K562 (cell line): ENCODE measurements at regions of chr16 and their contacts with region 1.

Region 1: GRCh38 chr16:68848786-68849185 is 5.5 kb downstream of the TANGO6 start:
- DNase-seq: no peak
- ATAC-seq: no peak
- H3K4me3 ChIP-seq: no peak overlapping the region
- H3K27ac ChIP-seq: no peak overlapping the region
- H3K4me1 ChIP-seq: peaks cover 0 to 3% of the 10 kb centered on the region in 2 experiments; a peak in 1 of 5 replicates
- H3K27me3 ChIP-seq: no peaks in the 10 kb centered on the region
- CTCF ChIP-seq: no peak
- EP300 ChIP-seq: no peak
- POLR2A ChIP-seq: no peak
- RAD21 ChIP-seq: no peak

Region 2: DNA sequence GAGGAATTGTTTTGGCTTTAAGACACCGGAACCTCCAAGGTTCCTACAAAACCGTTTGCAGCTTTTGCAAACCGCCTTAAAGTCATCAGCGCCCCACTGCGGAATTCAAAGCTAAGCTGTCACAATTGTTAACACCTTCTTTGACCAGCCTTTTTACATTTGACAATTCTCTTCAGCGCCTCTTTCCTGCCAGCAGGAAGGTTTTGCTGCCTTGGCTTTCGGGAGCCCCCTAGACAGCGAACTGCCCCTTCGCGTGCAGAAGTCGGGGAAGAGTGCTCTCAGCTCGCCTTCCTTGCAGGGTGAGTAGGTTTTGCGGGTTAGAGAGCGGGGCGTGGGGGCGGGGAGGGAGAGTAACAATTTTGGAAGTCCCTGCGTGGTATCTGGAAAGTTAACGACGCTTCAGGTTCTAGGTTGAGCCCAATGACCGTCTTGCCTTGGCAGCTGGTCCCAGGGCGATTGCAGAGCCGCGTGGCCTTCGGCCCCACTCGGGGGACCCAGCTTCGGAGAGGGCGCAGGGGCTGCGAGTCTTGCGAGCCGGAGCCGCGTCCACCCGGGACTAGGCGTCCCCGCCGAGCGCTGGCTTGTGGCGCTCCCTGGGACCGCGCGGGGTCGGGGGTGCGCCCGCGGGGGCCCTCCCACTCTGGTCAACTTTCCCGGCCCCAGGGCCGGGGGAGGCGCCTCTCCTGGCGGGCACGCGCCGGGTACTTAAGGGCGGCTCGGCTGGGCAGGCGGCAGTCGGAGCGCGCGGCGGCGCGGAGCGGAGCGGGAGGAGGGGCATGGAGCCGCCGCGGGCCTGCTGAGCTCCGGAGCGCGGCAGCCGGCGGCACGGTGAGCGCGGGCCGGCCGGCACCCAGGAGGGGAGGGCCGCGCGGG is 256.9 kb after region 1 on chr16 and contains the start of gene HAS3:
- CTCF ChIA-PET with region 1: no interaction called
- POLR2A ChIA-PET with region 1: interaction called, 3 read pairs
- in situ Hi-C with region 1: no loop called
- intact Hi-C with region 1: loop called (anchors 5 kb)
- DNase-seq: peak; percentile 61 to 85 (median 79)
- ATAC-seq: peak; percentile 87
- H3K4me3 ChIP-seq: peak within 1 kb of the TSS; percentile 65
- H3K27ac ChIP-seq: no peak within 1 kb of the TSS; the same call in 2 of the 3 replicates
- H3K4me1 ChIP-seq: peaks cover 0 to 25% of the 10 kb centered on the region in 2 experiments; a peak in 3 of 5 replicates
- H3K27me3 ChIP-seq: peaks cover 2 to 8% of the 10 kb centered on the region in 2 experiments; a peak in 1 of 5 replicates
- CTCF ChIP-seq: peak; percentile 60 to 89 (median 71)
- EP300 ChIP-seq: no peak
- POLR2A ChIP-seq: no peak
- RAD21 ChIP-seq: peak; percentile 69 to 88
- polyA plus RNA-seq, gene HAS3: 0.04 TPM in 1 of 2 experiments, not detected in the other

Region 3: DNA sequence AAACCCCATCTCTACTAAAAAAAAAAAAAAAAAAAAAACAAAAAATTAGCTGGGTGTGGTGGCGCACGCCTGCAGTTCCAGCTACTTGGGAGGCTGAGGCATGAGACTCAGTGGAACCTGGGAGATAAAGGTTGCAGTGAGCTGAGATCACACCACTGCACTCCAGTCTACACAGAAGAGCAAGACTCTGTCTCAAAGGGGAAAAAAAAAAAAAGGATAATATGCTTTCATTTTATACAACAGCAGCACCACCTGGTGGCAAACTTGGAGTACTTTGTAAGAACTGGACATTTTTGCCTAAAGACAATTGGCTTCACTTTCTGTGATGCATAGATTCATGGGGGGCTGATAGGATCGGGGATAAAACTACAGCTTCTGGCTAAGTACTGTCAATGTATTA is 275.1 kb after region 1 on chr16:
- CTCF ChIA-PET with region 1: interaction called, 8 read pairs
- POLR2A ChIA-PET with region 1: interaction called, 3 read pairs
- in situ Hi-C with region 1: no loop called
- intact Hi-C with region 1: loop called (anchors 5 kb)
- DNase-seq: peak; percentile 39 to 80 (median 44)
- ATAC-seq: peak; percentile 79
- H3K4me3 ChIP-seq: no peak overlapping the region
- H3K27ac ChIP-seq: no peak overlapping the region
- H3K4me1 ChIP-seq: peaks cover 0 to 4% of the 10 kb centered on the region in 2 experiments; a peak in 2 of 5 replicates
- H3K27me3 ChIP-seq: no peaks in the 10 kb centered on the region
- CTCF ChIP-seq: peak; percentile 59 to 81 (median 70)
- EP300 ChIP-seq: no peak
- POLR2A ChIP-seq: no peak
- RAD21 ChIP-seq: peak; percentile 42 to 67